Natural killer cell (primary cell): ENCODE measurements at regions of chr14 and their contacts with region 1.

Region 1: DNA sequence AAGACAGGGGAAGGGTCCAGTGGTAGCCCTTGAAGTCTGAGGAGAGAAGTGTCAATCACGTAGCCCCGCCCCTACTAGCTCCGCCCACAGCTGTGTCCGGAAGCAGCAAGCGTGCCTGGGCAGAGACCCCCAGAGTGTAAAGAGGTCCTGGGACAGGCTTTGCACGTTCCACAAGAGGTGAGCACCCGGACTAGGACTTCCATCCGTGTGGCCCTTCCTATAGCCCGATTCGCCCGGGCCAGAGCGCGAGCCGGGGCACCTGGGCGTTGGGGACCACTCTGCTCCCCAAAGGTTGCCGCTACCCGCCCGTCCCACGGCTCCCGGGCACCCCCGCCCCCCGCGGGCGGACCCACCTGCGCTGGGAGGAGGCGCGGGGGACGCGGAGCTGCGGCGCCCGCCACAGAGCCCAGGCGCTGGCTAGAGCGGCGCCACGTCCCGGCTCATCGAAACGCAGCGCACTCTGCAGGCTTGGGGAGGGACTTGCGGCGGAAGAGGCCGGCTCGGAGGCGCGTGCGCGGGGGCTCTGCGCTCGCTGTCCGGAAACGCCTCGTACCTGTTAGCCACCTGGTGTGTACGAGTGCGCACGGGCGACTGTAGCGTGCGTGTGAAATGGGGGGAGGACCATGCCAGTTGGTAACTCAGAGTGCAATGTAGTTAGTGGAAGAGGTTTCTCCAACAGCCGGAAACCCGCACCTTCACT is at the start of gene RABGGTA:
- DNase-seq: peak; percentile 92 to 99
- ATAC-seq: peak; percentile 84 to 94 (median 87)
- H3K4me3 ChIP-seq: peak within 1 kb of the TSS; percentile 88
- H3K4me3 Mint-ChIP-seq: peak within 1 kb of the TSS; percentile 94
- H3K27ac ChIP-seq: peak within 1 kb of the TSS; percentile 99
- H3K27ac Mint-ChIP-seq: peak within 1 kb of the TSS; percentile 91 to 92
- H3K4me1 ChIP-seq: peaks cover 30% of the 10 kb centered on the region
- H3K4me1 Mint-ChIP-seq: peaks cover 25 to 30% of the 10 kb centered on the region in 2 donors
- H3K27me3 ChIP-seq: no peaks in the 10 kb centered on the region
- H3K27me3 Mint-ChIP-seq: no peaks in the 10 kb centered on the region
- CTCF ChIP-seq: peak; percentile 63
- total RNA-seq, gene RABGGTA: 72.9 to 95.1 (median 88.5) TPM

Region 2: GRCh38 chr14:24146978-24147760 is 124.1 kb before region 1 on chr14 and contains the start of gene RNF31:
- intact Hi-C with region 1: loop called (anchors 1 kb)
- DNase-seq: peak; percentile 95 to 99
- ATAC-seq: peak; percentile 86 to 95 (median 86)
- H3K4me3 ChIP-seq: peak within 1 kb of the TSS; percentile 91
- H3K4me3 Mint-ChIP-seq: peak within 1 kb of the TSS; percentile 97
- H3K27ac ChIP-seq: peak within 1 kb of the TSS; percentile 88
- H3K27ac Mint-ChIP-seq: peak within 1 kb of the TSS; percentile 94
- H3K4me1 ChIP-seq: peaks cover 29% of the 10 kb centered on the region
- H3K4me1 Mint-ChIP-seq: peaks cover 53 to 73% of the 10 kb centered on the region in 2 donors
- H3K27me3 ChIP-seq: no peaks in the 10 kb centered on the region
- H3K27me3 Mint-ChIP-seq: no peaks in the 10 kb centered on the region
- CTCF ChIP-seq: no peak
- total RNA-seq, gene RNF31: 96.9 to 134 (median 125) TPM

Region 3: GRCh38 chr14:24232121-24232644 is 39.1 kb before region 1 on chr14 and contains the start of gene NEDD8:
- intact Hi-C with region 1: loop called (anchors 5 kb)
- DNase-seq: peak; percentile 78 to 92
- ATAC-seq: peak; percentile 88 to 91 (median 90)
- H3K4me3 ChIP-seq: peak within 1 kb of the TSS; percentile 71
- H3K4me3 Mint-ChIP-seq: peak within 1 kb of the TSS; percentile 86
- H3K27ac ChIP-seq: peak within 1 kb of the TSS; percentile 77
- H3K27ac Mint-ChIP-seq: peak within 1 kb of the TSS; percentile 87 to 100
- H3K4me1 ChIP-seq: peaks cover 24% of the 10 kb centered on the region
- H3K4me1 Mint-ChIP-seq: peaks cover 46 to 55% of the 10 kb centered on the region in 2 donors
- H3K27me3 ChIP-seq: no peaks in the 10 kb centered on the region
- H3K27me3 Mint-ChIP-seq: no peaks in the 10 kb centered on the region
- CTCF ChIP-seq: no peak
- total RNA-seq, gene NEDD8: 93.6 to 109 (median 95.9) TPM

Region 4: GRCh38 chr14:24241829-24242443 is 29.3 kb before region 1 on chr14:
- intact Hi-C with region 1: loop called (anchors 1 kb)
- DNase-seq: peak; percentile 92 to 97
- ATAC-seq: peak; percentile 79 to 92 (median 79)
- H3K4me3 ChIP-seq: peak overlapping the region; percentile 74
- H3K4me3 Mint-ChIP-seq: peak overlapping the region; percentile 98
- H3K27ac ChIP-seq: peak overlapping the region; percentile 97
- H3K27ac Mint-ChIP-seq: peak overlapping the region; percentile 100
- H3K4me1 ChIP-seq: peaks cover 41% of the 10 kb centered on the region
- H3K4me1 Mint-ChIP-seq: peaks cover 61 to 71% of the 10 kb centered on the region in 2 donors
- H3K27me3 ChIP-seq: no peaks in the 10 kb centered on the region
- H3K27me3 Mint-ChIP-seq: no peaks in the 10 kb centered on the region
- CTCF ChIP-seq: peak; percentile 39

Region 5: DNA sequence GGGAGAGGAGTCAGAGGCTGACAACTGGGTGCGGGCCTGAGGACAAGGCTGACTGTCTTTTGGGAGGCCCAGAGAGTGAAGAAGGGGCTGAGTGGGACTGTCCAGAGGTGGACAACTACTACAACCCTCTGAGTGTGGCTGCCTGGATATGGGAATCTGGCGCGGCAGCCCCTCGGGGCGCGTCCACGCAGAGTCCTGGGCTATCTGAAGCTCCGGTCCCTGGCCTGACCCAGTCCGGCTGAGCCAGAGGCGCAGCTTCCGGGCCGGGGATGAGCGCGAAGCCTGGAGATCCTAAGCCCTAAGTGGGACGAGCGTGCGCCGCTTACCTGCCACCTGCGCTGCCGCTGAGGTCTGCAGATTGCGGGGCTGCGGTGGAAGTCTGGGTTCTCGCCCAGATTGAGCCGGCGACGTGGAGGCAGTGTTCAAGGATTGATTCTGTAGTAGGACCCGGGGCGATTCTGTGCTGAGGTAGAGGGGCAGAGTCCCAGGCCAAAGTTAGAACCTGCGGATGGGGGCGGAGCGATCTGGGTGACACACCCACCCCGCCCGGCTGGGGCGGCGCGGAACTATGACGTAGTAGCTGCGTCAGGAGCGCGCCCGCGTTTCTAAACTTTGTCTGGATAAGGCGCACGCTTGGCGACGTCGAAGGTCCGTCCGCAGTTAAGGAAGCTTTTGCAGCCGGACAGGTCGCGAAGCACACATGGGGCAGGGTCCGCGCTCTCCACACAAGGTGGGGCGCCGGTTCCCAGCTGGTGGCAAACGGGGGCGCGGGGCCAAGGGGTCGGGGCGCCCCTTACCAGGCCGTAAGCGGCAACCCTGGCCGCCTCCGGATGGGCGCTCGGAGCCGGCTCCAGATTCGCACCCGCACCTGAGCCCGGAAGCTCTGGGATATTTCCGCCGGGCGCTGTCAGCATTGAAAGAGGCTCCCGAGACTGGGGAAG is 28.2 kb after region 1 on chr14 and contains the starts of genes DHRS1 and NOP9:
- intact Hi-C with region 1: loop called (anchors 1 kb)
- DNase-seq: peak; percentile 95 to 96
- ATAC-seq: peak; percentile 79 to 89 (median 82)
- H3K4me3 ChIP-seq: peak within 1 kb of the TSS; percentile 51
- H3K4me3 Mint-ChIP-seq: peak within 1 kb of the TSS; percentile 91
- H3K27ac ChIP-seq: peak within 1 kb of the TSS; percentile 61
- H3K27ac Mint-ChIP-seq: peak within 1 kb of the TSS; percentile 91 to 92
- H3K4me1 ChIP-seq: peaks cover 25% of the 10 kb centered on the region
- H3K4me1 Mint-ChIP-seq: peaks cover 42 to 55% of the 10 kb centered on the region in 2 donors
- H3K27me3 ChIP-seq: no peaks in the 10 kb centered on the region
- H3K27me3 Mint-ChIP-seq: no peaks in the 10 kb centered on the region
- CTCF ChIP-seq: no peak
- total RNA-seq, gene DHRS1: 39.8 to 59.0 (median 43.3) TPM
- total RNA-seq, gene NOP9: 34.9 to 47.8 (median 39.2) TPM

Region 6: DNA sequence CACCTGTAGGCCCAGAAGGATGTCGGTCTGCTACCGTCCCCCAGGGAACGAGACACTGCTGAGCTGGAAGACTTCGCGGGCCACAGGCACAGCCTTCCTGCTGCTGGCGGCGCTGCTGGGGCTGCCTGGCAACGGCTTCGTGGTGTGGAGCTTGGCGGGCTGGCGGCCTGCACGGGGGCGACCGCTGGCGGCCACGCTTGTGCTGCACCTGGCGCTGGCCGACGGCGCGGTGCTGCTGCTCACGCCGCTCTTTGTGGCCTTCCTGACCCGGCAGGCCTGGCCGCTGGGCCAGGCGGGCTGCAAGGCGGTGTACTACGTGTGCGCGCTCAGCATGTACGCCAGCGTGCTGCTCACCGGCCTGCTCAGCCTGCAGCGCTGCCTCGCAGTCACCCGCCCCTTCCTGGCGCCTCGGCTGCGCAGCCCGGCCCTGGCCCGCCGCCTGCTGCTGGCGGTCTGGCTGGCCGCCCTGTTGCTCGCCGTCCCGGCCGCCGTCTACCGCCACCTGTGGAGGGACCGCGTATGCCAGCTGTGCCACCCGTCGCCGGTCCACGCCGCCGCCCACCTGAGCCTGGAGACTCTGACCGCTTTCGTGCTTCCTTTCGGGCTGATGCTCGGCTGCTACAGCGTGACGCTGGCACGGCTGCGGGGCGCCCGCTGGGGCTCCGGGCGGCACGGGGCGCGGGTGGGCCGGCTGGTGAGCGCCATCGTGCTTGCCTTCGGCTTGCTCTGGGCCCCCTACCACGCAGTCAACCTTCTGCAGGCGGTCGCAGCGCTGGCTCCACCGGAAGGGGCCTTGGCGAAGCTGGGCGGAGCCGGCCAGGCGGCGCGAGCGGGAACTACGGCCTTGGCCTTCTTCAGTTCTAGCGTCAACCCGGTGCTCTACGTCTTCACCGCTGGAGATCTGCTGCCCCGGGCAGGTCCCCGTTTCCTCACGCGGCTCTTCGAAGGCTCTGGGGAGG is 39.6 kb after region 1 on chr14 and contains the start of gene LTB4R:
- intact Hi-C with region 1: loop called (anchors 1 kb)
- DNase-seq: peak; percentile 69 to 87
- ATAC-seq: peak; percentile 75 to 87 (median 81)
- H3K4me3 ChIP-seq: peak within 1 kb of the TSS; percentile 45
- H3K4me3 Mint-ChIP-seq: peak within 1 kb of the TSS; percentile 88
- H3K27ac ChIP-seq: peak within 1 kb of the TSS; percentile 84
- H3K27ac Mint-ChIP-seq: peak within 1 kb of the TSS; percentile 94 to 96
- H3K4me1 ChIP-seq: peaks cover 77% of the 10 kb centered on the region
- H3K4me1 Mint-ChIP-seq: peaks cover 71 to 92% of the 10 kb centered on the region in 2 donors
- H3K27me3 ChIP-seq: no peaks in the 10 kb centered on the region
- H3K27me3 Mint-ChIP-seq: no peaks in the 10 kb centered on the region
- CTCF ChIP-seq: peak; percentile 37
- total RNA-seq, gene LTB4R: 33.5 to 55.7 (median 49.7) TPM

Region 7: GRCh38 chr14:24673534-24674203 is 402.4 kb after region 1 on chr14:
- intact Hi-C with region 1: loop called (anchors 5 kb)
- DNase-seq: peak; percentile 52 to 88
- ATAC-seq: peak; percentile 65 to 81 (median 80)
- H3K4me3 ChIP-seq: peak overlapping the region; percentile 5
- H3K4me3 Mint-ChIP-seq: peak overlapping the region; percentile 95
- H3K27ac ChIP-seq: peak overlapping the region; percentile 80
- H3K27ac Mint-ChIP-seq: peak overlapping the region; percentile 99
- H3K4me1 ChIP-seq: peaks cover 36% of the 10 kb centered on the region
- H3K4me1 Mint-ChIP-seq: peaks cover 83 to 91% of the 10 kb centered on the region in 2 donors
- H3K27me3 ChIP-seq: no peaks in the 10 kb centered on the region
- H3K27me3 Mint-ChIP-seq: no peaks in the 10 kb centered on the region
- CTCF ChIP-seq: no peak